Activated CD4-positive, alpha-beta T cell treated with anti-CD3 and anti-CD28 coated beads for 36 hours (primary cell): ENCODE measurements at regions of chr11 and their contacts with region 1.

Region 1: DNA sequence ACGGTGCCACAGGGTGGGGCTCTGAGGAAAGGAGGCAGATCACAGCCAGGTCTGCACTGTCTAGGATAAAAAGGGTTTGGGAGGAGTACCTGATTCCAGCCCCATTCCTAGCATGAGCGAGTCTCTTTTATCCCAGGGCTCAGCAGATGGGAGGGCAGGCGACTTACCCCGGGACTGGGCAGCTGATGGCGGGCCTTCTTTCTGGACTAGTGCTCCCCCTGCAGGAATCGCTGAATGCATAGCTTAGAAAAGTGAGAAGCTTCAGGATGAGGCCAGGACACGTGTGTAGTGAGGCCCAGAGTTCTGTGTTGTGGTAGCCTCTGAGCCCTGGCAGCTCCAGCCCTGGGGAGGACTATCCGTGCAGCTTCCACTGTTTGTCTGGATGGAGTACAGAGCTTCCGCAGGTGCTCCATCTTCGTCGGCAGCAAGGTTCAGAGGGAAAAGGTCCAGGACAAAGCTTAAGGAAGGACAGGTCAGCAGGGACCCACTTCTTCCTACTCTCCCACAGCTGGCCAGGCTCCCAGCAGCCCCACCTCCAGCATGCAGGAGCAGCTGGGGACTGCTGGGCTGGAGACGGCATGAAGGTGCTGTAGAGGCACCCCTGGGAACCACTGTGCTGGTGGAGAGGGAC is 30.4 kb downstream of the COMMD9 start:
- DNase-seq: peak; percentile 61
- ATAC-seq: peak; percentile 71
- H3K4me3 Mint-ChIP-seq: no peak overlapping the region
- H3K27ac Mint-ChIP-seq: no peak overlapping the region
- H3K4me1 Mint-ChIP-seq: no peaks in the 10 kb centered on the region
- H3K27me3 Mint-ChIP-seq: peaks cover 21% of the 10 kb centered on the region

Region 2: DNA sequence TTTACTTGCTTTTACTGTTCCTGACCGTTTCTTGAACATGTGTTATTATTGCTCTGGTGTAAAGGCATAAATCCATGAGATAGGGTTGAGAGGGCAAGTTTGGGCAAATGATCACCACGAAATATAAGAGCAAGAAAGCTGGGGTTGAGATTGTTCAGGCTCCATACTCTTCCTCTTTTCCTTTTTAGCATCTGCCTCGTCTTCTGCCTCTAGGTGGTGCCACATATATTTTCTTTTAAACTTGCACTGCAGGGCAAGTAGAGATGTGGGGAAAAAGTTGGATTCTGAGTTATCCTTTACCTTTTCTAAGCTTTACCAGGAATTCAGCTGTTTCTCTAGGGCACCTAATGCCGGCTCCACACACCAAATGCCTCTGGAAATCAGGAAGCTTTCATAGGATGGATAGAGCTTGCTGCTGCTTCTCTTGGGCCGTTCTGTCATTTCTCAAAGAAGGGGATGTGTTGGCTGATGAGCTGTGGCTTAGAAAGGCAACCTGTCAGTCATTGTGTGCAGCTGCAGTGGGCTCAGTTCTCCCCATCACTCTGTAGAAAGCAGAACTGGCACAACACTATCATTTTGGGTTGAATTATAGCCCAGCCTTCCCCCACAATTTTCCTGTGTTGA is 216.7 kb before region 1 on chr11:
- CTCF ChIA-PET with region 1: interaction called, 5 read pairs
- POLR2A ChIA-PET with region 1: no interaction called
- intact Hi-C with region 1: loop called (anchors 1 to 2 kb)
- DNase-seq: no peak
- ATAC-seq: no peak
- H3K4me3 Mint-ChIP-seq: no peak overlapping the region
- H3K27ac Mint-ChIP-seq: no peak overlapping the region
- H3K4me1 Mint-ChIP-seq: no peaks in the 10 kb centered on the region
- H3K27me3 Mint-ChIP-seq: peaks cover 10% of the 10 kb centered on the region

Region 3: DNA sequence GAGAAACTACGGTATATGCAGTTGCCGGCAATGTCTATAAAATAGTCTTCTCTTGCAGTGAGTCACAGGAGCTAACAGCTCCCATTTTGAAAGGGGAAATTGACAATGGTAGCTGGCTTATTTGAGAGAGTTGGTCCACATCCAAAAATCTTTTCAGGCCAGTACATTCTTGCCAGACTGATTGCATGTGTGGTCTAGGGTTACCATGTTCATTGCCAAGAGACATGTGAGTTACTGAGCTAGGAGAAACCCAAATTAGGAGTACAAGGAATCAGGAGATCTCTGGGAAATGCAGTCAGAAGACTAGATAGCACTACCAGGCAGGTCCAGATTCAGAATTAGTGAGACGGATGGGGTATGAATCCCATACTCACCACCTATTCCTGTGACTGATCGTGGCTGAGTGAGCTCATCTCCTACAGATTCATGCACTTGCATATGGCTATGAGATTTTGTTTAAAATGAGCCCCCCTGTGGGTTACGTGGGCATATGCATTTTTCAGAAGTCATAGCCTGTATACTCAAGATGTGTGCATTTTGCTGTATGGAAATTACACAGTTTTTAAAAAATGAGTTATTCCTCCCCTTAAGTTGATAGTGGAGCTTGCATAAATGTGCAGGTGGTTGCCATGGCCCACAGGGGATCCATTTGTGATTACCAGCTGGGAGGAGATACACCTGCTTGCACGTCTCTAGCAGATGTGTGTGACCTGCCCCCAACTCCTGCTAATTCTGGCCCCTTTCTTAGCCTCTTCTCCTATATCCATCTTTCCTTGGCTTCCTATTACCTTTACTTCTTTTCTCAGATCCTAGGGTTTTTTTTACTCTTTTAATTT is 72.3 kb before region 1 on chr11:
- CTCF ChIA-PET with region 1: interaction called, 4 read pairs
- POLR2A ChIA-PET with region 1: no interaction called
- intact Hi-C with region 1: loop called in 1 of 2 experiments (anchors 10 kb)
- DNase-seq: no peak
- ATAC-seq: no peak
- H3K4me3 Mint-ChIP-seq: no peak overlapping the region
- H3K27ac Mint-ChIP-seq: no peak overlapping the region
- H3K4me1 Mint-ChIP-seq: no peaks in the 10 kb centered on the region
- H3K27me3 Mint-ChIP-seq: peaks cover 9% of the 10 kb centered on the region

Region 4: DNA sequence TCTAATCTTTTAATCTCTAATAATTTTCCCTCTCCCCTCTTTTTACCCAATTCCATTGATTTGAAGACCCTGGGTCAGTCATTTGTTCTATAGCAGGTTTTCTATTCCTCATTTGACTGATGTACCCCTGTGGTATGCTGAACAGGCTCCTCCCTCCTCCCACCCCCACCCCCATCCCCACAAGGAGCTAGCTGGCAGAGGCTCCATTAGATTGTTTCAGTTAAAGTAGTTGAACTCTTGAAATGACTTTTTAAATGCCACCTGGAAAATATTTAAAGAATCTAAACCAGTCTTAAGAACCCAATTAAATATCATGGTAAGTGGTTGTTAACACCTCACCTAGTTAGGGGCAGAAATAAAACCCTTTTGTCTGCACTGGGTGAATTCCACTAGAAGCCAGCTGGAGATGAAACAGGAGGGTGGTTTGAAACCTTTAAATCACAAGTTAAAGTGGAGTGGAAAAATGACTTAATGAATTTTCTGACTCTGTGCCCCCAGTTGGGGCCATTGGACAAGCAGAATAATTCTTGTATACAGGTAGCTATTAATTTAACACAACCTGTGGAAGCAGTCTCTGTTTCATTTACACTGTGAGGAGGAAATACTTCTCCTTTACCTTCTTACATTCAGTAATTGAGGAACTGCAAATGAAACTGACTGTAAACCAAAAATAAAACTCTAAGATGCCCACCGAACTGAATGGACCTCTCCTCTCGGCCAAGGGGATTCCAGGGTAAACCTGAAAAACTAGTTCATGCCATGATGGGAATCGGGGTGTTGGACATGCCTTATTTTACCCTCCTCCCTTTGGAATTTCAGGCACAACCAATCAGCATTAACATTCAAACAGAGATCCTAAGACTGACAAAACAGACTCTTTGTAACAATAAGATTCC is 67.9 kb after region 1 on chr11:
- CTCF ChIA-PET with region 1: no interaction called
- POLR2A ChIA-PET with region 1: no interaction called
- intact Hi-C with region 1: no loop called
- DNase-seq: no peak
- ATAC-seq: peak; percentile 47
- H3K4me3 Mint-ChIP-seq: no peak overlapping the region
- H3K27ac Mint-ChIP-seq: peak overlapping the region; percentile 76
- H3K4me1 Mint-ChIP-seq: peaks cover 33% of the 10 kb centered on the region
- H3K27me3 Mint-ChIP-seq: peaks cover 6% of the 10 kb centered on the region